ENCODE measurements at regions of chr3 and their contacts with region 1.

Region 1: DNA sequence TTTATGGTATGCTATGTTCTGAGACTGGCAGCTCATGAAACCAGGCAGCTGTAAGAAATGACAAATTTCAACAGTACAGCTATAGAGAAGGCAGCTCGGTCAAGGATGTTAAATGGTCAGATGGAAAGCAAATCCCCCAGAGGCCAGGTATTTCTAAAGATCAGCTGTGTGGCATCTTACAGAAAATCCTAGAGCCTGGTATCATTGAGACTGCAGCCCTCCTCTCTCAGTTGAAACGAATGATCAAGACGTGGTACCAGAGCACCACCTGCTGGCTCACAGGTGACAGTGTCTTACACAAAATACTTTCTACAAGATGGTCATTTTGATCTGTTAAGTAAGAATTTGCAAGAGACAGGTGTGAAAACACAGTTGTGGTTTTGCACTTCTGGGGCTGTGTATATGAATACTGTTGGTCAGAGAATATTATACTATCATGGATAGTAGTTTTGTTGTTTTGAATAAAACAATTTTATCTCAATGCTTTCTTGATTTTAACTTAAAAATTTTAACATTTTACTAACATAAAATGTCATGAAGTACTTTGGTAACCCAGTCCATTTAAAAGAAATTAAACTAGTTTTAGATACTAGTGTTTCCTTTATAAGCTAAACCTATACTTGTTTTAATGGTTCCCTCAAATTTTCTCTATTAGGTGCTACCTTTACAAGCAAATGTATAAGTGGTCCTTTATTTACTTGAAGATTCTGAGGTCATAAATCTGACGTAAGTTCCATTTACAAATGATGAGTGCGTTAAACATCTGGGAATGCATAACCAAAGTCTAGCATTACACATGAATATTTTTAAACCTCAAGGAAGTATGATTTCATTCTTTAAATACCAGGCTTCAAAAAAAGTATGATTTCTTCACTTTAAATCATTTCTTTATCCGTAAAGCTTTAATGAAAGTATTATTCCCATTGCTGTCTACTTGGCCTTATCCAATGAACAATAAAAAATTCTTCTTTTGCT is 121.8 kb downstream of the PDZRN3 start:
- DNase-seq: peak; percentile 53 to 89 (median 76)

Region 2: DNA sequence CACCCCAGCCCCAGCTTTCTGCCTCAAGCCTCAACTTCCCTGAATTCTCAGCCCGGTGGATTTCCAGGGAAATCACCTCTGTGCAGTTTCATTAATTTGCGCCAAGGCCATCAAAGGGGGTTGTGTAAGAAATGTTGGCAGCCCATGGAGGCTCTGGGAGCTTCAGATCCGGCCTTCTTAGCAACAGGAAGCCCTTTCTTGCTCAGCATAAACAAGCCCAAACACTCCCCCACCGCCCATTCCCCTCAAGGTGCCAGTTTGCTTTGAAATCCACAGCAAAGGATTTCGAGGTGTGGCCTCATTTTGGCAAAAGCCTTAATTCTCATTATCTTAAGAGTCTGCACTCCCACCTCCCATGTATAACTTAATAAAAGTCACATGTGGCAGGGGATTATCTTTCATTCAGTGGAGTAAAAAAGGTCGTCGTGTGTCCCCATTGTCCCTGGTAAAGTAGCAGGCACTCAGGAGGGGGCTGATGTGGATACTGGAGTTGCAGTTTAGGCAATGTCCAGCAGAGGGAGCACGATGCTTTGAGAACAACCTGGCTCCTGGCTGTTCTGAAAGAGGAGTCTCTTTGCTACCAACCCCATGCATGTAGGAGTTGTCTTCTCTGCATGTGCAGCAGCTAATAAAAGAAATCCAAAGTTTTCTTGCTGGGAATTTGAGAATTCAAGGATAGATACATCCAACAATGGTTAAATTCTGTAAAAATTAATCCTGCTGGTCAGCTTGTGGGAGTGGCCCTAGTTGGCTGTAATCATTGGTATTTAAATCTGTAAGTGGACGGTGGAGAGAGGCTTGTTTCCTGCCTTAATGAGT is 401.9 kb before region 1 on chr3:
- intact Hi-C with region 1: loop called (anchors 2 kb)
- DNase-seq: peak; percentile 39 to 96 (median 90)

Region 3: GRCh38 chr3:73379465-73379864 is 123.4 kb before region 1 on chr3:
- intact Hi-C with region 1: no loop called
- DNase-seq: no peak

Region 4: DNA sequence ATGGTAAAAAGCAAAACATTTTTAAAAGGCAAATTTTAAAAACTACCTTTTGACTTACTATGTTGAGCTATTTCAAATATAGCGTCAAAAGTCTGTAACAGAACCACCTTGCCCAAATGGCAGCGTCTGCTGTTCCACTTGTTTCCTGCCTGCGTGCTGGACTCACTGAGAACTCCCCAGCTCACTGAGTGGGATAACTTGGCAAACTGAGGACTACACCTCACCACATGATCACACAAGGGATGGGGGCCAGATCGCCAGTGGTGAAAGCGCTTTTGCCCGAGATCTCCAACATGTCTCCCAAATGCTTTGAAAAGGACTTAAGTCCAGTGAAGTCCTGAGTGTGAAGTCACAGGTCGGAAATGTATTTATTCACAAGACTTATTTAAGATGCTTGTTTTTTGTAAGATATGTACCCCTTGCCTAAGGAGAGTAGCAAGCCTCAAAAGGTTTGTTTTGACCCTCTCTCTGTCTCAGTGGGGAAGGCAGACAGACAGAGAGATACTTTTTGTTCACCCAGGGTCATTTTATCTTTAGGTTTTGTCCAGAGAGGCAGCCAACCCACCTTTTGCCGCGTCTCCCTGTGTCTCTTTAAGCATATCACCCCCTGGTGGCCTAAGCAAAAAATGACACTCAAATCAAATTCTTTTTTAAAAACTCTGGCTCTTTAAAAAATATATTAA is 70.7 kb before region 1 on chr3:
- intact Hi-C with region 1: no loop called
- DNase-seq: peak in 3 of 42 donors; percentile 8 to 56 (median 10)

Region 5: GRCh38 chr3:73766599-73767381 is 263.9 kb after region 1 on chr3:
- intact Hi-C with region 1: loop called (anchors 10 kb)
- DNase-seq: no peak

Measured in head of caudate nucleus (tissue), 42 donors.